A549 (cell line): ENCODE measurements at regions of chr3 and their contacts with region 1.

Region 1: GRCh38 chr3:156674046-156674910 is at the start of gene TIPARP:
- DNase-seq: peak; percentile 85 to 98
- ATAC-seq: peak; percentile 84 to 88
- H3K4me3 ChIP-seq: peak within 1 kb of the TSS; percentile 90
- H3K27ac ChIP-seq: peak within 1 kb of the TSS; percentile 88 to 92
- H3K4me1 ChIP-seq: peaks cover 30% of the 10 kb centered on the region
- CTCF ChIP-seq: peak; percentile 80
- EP300 ChIP-seq: no peak
- POLR2A ChIP-seq: peak; percentile 98
- RAD21 ChIP-seq: peak; percentile 71 to 91
- polyA plus RNA-seq, gene TIPARP: 16.5 and 16.7 TPM in 2 replicates

Region 2: DNA sequence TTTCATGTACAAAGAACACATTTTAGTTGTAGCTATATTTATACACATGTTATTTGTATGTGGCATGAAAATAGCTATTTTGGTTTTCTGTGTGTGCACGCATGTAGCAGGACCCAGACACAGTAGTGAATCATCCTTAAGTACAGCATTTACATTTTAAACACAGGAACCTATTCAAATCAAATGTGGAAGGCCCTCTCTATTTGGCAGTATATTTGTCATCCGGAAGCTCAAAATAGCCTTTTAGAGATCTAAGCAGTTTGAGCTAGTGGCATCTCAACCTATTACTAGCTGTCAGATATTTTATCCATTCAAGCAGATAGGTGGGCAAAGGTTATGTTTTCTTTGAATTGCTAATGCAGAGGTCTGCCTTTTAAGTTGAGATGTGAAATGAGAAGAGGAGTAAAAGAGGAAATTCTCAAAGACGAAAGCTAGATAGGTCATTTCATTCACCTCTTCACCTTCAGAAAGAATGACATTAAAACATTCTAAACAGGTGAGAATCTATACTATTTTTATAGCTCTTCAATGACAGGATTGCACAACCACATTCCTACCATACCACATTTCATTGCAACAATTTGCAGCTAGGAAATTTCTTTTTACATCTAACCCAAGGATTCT is 46.2 kb before region 1 on chr3:
- CTCF ChIA-PET with region 1: interaction called, 12 read pairs
- POLR2A ChIA-PET with region 1: no interaction called
- DNase-seq: no peak
- ATAC-seq: no peak
- H3K4me3 ChIP-seq: no peak overlapping the region
- H3K27ac ChIP-seq: no peak overlapping the region
- H3K4me1 ChIP-seq: peaks cover 10% of the 10 kb centered on the region; the same call in 2 of the 3 replicates
- CTCF ChIP-seq: no peak
- EP300 ChIP-seq: no peak
- POLR2A ChIP-seq: no peak
- RAD21 ChIP-seq: no peak

Region 3: GRCh38 chr3:156638271-156638670 is 36.0 kb before region 1 on chr3:
- CTCF ChIA-PET with region 1: no interaction called
- POLR2A ChIA-PET with region 1: no interaction called
- DNase-seq: no peak
- ATAC-seq: no peak
- H3K4me3 ChIP-seq: no peak overlapping the region
- H3K27ac ChIP-seq: no peak overlapping the region
- H3K4me1 ChIP-seq: no peaks in the 10 kb centered on the region
- CTCF ChIP-seq: no peak
- EP300 ChIP-seq: no peak
- POLR2A ChIP-seq: no peak
- RAD21 ChIP-seq: no peak

Region 4: DNA sequence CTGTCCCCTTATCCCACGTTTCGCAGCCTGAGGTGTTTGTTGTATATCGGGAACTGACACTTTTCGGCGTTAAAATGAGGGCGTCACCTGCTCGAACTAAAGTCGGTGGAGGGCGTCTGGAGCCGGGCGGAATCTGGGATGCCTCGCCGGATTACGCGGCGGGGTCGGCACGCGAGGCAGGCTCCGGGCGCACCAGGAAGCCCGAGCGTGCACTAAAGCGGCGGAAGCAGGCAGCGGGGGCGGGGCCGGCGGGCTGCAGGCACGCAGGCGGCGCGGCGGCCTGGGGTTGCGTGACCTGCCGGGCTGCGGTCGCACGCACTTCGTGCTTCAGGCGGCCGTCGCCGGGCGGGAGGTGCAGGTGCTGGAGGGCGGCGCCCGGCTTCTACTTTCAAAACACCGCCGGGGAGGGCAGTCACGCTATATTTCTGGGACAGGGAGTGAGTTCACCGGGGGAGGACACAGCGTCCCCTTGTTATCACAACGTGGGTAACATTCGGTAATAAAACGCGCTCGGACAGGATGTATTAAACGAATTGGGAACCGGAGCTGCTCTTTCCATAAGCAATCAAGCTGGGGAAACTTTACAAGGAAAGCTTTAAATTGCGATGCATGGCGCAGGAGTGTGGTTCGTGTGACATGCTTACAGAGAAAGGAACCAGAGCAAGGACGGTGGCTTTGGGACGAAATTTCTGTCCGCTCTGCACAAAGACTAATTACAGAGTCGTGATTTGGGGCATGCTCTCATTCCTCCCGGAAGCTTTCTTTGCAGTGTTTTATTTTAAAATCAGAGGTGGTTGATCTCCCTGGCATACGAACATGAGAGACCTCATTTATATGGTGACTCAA is 142.7 kb after region 1 on chr3:
- CTCF ChIA-PET with region 1: interaction called, 12 read pairs
- POLR2A ChIA-PET with region 1: interaction called, 15 read pairs
- DNase-seq: peak; percentile 49 to 91
- ATAC-seq: peak; percentile 81 to 82
- H3K4me3 ChIP-seq: peak overlapping the region; percentile 62
- H3K27ac ChIP-seq: peak overlapping the region; percentile 91 to 92
- H3K4me1 ChIP-seq: peaks cover 65% of the 10 kb centered on the region
- CTCF ChIP-seq: 0 out of 3 replicates have a peak, but pooled peaks have one; percentile 20
- EP300 ChIP-seq: peak; percentile 45 to 88; a peak in 3 of 5 replicates
- POLR2A ChIP-seq: peak; percentile 44
- RAD21 ChIP-seq: peak; percentile 20 to 34; a peak in 3 of 5 replicates

Region 5: DNA sequence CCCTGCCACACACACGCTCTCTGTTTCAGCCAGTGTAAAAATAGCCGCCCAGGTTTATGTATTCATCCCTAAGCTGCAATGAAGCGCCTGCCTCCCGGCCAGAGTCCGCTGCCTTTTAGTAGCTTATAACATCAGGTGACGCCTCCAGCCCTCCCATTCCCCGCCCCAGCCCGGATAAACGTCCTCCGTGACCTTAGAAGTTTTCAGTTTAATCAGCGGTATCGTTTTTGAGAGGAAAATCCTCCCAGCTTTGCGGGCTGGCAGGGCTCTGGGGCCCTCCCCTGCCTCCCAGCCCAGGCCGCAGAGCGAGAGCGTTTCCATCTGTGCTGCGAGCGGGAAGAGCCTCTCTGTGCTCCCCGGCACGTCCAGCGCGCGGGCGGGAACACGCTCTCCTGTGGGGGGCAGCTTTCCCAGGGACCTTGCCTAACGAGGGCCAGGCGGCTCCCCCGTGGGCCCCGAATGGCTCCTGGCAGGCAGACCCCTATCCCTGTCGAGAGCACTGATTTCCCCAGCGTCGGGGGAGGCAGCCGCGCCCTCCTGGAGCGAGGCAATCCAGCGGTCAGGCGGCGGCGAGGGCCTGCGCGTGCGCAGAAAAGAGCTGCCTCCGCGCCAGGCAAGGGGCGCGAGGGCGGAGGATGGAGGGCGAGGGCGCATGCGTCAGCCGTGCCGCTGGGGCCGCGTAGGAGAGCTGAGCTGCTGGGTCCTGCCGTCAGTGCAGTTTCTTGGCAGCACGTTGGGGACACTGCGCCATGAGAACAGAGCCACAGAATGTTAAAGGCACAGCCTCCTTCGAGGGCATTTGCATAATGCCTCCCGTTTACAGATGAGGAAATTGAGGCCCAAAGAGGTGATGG is 414.6 kb after region 1 on chr3:
- CTCF ChIA-PET with region 1: interaction called, 96 read pairs
- POLR2A ChIA-PET with region 1: interaction called, 39 read pairs
- DNase-seq: peak; percentile 93 to 97
- ATAC-seq: peak; percentile 94
- H3K4me3 ChIP-seq: peak overlapping the region; percentile 52
- H3K27ac ChIP-seq: peak overlapping the region; percentile 93 to 98
- H3K4me1 ChIP-seq: peaks cover 23% of the 10 kb centered on the region
- CTCF ChIP-seq: no peak
- EP300 ChIP-seq: no peak
- POLR2A ChIP-seq: peak; percentile 84
- RAD21 ChIP-seq: no peak; a peak in 2 of 5 replicates